ENCODE measurements at regions of chr5 and their contacts with region 1.

Region 1: GRCh38 chr5:72244862-72245371 is 75.1 kb downstream of the MRPS27 start:
- DNase-seq: peak; percentile 78
- H3K4me3 ChIP-seq: no peak overlapping the region
- H3K27ac ChIP-seq: peak overlapping the region; percentile 49
- H3K4me1 ChIP-seq: peaks cover 54% of the 10 kb centered on the region
- H3K27me3 ChIP-seq: no peaks in the 10 kb centered on the region
- CTCF ChIP-seq: peak; percentile 47 to 52
- POLR2A ChIP-seq: no peak

Region 2: DNA sequence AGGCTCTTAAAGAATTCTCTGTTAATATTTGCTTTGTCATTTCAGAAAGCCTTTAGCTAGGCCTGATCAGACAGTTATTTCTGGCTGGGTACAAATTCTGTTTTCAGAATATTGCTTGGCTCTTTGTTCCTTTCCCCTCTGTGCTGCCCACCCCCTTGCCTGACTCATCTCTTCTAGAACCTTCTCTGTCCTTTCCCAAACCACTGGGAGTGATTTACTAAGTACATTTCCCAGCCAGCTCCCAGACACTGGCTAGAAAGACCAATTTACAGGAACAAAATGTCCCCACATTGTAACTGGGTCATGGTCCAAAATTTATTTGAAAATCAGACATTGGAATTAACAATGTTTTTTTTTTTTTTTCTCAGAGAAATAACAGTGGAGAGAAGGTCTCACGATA is 270.8 kb before region 1 on chr5:
- CTCF ChIA-PET with region 1: no interaction called
- POLR2A ChIA-PET with region 1: no interaction called
- dilution Hi-C with region 1: no loop called
- intact Hi-C with region 1: no loop called
- DNase-seq: no peak
- H3K4me3 ChIP-seq: no peak overlapping the region
- H3K27ac ChIP-seq: no peak overlapping the region
- H3K4me1 ChIP-seq: no peaks in the 10 kb centered on the region
- H3K27me3 ChIP-seq: peaks cover 10 to 42% of the 10 kb centered on the region in 2 experiments
- CTCF ChIP-seq: no peak
- POLR2A ChIP-seq: no peak

Region 3: GRCh38 chr5:72138943-72139521 is 105.9 kb before region 1 on chr5:
- CTCF ChIA-PET with region 1: interaction called, 8 read pairs
- POLR2A ChIA-PET with region 1: no interaction called
- dilution Hi-C with region 1: no loop called
- intact Hi-C with region 1: loop called (anchors 2 kb)
- DNase-seq: no peak
- H3K4me3 ChIP-seq: no peak overlapping the region
- H3K27ac ChIP-seq: peak overlapping the region; percentile 24
- H3K4me1 ChIP-seq: peaks cover 73% of the 10 kb centered on the region
- H3K27me3 ChIP-seq: no peaks in the 10 kb centered on the region
- CTCF ChIP-seq: no peak
- POLR2A ChIP-seq: no peak

Region 4: DNA sequence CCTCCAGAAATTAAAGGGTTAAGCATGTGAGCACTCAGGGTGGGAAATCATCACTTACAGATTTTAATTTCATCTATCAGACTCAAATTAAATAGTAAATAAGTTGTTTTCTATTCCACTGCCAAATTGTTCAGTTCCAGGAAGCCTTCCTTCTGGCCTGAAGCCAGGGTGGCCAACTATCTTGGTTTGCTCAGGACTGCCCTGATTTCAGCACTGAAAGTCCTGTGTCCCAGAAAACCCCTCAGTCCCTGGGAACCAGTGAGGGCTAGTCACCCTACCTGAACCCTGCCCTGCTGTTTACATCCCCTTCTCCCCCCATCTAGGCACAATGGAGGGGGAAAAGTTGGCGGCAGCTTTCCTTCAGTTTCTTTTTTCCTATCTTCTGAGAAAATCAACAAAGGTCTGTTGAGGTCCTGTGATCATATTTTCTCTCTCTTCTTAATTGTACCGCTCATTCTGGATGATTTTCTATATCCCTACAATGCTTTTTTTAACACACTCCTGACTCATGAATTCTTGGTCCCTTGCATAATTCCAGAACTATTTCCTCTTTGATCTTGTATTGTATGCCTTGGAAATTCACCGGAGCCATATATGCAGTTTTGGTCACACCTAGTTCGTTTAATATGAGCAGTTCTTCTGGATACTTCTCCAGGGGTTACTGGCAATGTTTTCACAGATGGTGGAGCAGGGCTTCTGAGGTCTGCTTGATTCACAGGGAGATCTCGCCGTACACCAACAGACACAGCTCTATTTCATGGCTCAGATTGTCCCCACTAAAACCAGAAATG is 33.8 kb before region 1 on chr5:
- CTCF ChIA-PET with region 1: interaction called, 35 read pairs
- POLR2A ChIA-PET with region 1: interaction called, 4 read pairs
- dilution Hi-C with region 1: no loop called
- intact Hi-C with region 1: loop called (anchors 2 kb)
- DNase-seq: peak; percentile 93
- H3K4me3 ChIP-seq: peak overlapping the region in 1 of 3 experiments; percentile 26
- H3K27ac ChIP-seq: peak overlapping the region; percentile 97
- H3K4me1 ChIP-seq: peaks cover 38% of the 10 kb centered on the region
- H3K27me3 ChIP-seq: no peaks in the 10 kb centered on the region
- CTCF ChIP-seq: no peak
- POLR2A ChIP-seq: peak; percentile 31

Region 5: GRCh38 chr5:72255237-72255636 is 10.3 kb after region 1 on chr5:
- CTCF ChIA-PET with region 1: interaction called, 5 read pairs
- POLR2A ChIA-PET with region 1: interaction called, 3 read pairs
- dilution Hi-C with region 1: no loop called
- intact Hi-C with region 1: loop called (anchors 1 kb)
- DNase-seq: peak; percentile 79
- H3K4me3 ChIP-seq: no peak overlapping the region
- H3K27ac ChIP-seq: peak overlapping the region; percentile 69
- H3K4me1 ChIP-seq: peaks cover 66% of the 10 kb centered on the region
- H3K27me3 ChIP-seq: no peaks in the 10 kb centered on the region
- CTCF ChIP-seq: no peak
- POLR2A ChIP-seq: no peak

Region 6: GRCh38 chr5:72280581-72281170 is 35.8 kb after region 1 on chr5:
- CTCF ChIA-PET with region 1: interaction called, 17 read pairs
- POLR2A ChIA-PET with region 1: no interaction called
- dilution Hi-C with region 1: no loop called
- intact Hi-C with region 1: no loop called
- DNase-seq: peak; percentile 60
- H3K4me3 ChIP-seq: no peak overlapping the region
- H3K27ac ChIP-seq: no peak overlapping the region
- H3K4me1 ChIP-seq: peaks cover 18% of the 10 kb centered on the region
- H3K27me3 ChIP-seq: no peaks in the 10 kb centered on the region
- CTCF ChIP-seq: peak; percentile 32 to 51
- POLR2A ChIP-seq: no peak

Region 7: GRCh38 chr5:72347801-72348305 is 102.9 kb after region 1 on chr5:
- CTCF ChIA-PET with region 1: no interaction called
- POLR2A ChIA-PET with region 1: no interaction called
- dilution Hi-C with region 1: no loop called
- intact Hi-C with region 1: no loop called
- DNase-seq: no peak
- H3K4me3 ChIP-seq: no peak overlapping the region
- H3K27ac ChIP-seq: no peak overlapping the region
- H3K4me1 ChIP-seq: no peaks in the 10 kb centered on the region
- H3K27me3 ChIP-seq: no peaks in the 10 kb centered on the region
- CTCF ChIP-seq: no peak
- POLR2A ChIP-seq: no peak

Region 8: DNA sequence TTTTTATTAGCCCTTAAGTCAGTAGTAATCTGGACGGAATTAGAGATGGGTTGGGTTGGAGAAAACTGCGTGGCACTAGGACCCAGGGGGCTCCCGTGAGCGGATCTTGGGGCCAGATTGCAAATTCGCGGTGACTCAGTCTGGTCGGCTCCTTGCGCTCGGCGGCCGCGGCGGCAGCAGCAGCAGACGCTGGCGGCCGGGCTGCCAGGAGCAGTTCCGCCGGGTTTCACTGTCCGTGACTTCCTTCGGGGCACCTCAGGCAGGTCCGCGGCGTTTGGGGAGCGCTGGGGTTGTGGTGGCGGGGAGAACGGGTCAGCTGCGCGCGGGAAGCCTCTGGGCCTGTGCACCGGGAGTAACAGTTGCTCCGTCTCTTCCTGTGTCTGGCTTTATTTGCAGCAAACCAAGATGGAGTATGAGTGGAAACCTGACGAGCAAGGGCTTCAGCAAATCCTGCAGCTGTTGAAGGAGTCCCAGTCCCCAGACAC is 603.1 kb after region 1 on chr5:
- CTCF ChIA-PET with region 1: no interaction called
- POLR2A ChIA-PET with region 1: no interaction called
- dilution Hi-C with region 1: no loop called
- intact Hi-C with region 1: loop called (anchors 10 kb)
- DNase-seq: peak; percentile 93
- H3K4me3 ChIP-seq: peak overlapping the region; percentile 62 to 99 (median 97)
- H3K27ac ChIP-seq: peak overlapping the region; percentile 90
- H3K4me1 ChIP-seq: peaks cover 58% of the 10 kb centered on the region
- H3K27me3 ChIP-seq: no peaks in the 10 kb centered on the region
- CTCF ChIP-seq: no peak
- POLR2A ChIP-seq: peak; percentile 92

Measured in endothelial cell of umbilical vein (primary cell).